T-cell (primary cell): ENCODE measurements at regions of chr17 and their contacts with region 1.

Region 1: GRCh38 chr17:29111816-29112499 is 68.2 kb downstream of the MYO18A start:
- DNase-seq: peak; percentile 15 to 74 (median 54)
- ATAC-seq: peak; percentile 68 to 77 (median 70)
- H3K4me3 ChIP-seq: no peak overlapping the region
- H3K4me3 Mint-ChIP-seq: no peak overlapping the region
- H3K27ac ChIP-seq: no peak overlapping the region
- H3K27ac Mint-ChIP-seq: no peak overlapping the region
- H3K4me1 ChIP-seq: peaks cover 0 to 19% of the 10 kb centered on the region in 2 experiments
- H3K4me1 Mint-ChIP-seq: peaks cover 2 to 5% (median 2%) of the 10 kb centered on the region in 3 donors
- H3K27me3 ChIP-seq: no peaks in the 10 kb centered on the region
- H3K27me3 Mint-ChIP-seq: no peaks in the 10 kb centered on the region

Region 2: DNA sequence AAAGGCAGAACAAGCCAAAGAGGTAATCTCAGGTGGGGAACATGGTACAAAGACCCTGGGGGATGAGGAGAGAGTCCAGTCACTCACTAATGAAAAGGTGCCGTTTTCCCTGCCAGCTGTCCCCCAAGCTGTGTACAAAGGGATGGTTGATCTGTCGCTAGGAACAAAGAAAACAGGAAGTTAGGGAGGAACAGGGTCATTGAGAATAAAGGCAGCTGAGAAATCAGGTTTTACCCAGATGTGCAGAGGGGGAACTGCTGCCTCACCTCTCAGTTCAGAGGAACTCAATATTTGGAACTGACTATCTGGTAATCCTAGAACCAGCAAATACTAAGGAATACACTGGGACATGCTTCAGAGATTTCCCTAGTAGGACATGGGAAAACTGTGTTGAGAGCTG is 499.4 kb before region 1 on chr17:
- CTCF ChIA-PET with region 1: no interaction called
- POLR2A ChIA-PET with region 1: no interaction called
- DNase-seq: no peak
- ATAC-seq: no peak
- H3K4me3 ChIP-seq: no peak overlapping the region
- H3K4me3 Mint-ChIP-seq: no peak overlapping the region
- H3K27ac ChIP-seq: no peak overlapping the region
- H3K27ac Mint-ChIP-seq: peak overlapping the region; percentile 32 to 70
- H3K4me1 ChIP-seq: no peaks in the 10 kb centered on the region
- H3K4me1 Mint-ChIP-seq: peaks cover 4 to 9% (median 8%) of the 10 kb centered on the region in 3 donors
- H3K27me3 ChIP-seq: no peaks in the 10 kb centered on the region
- H3K27me3 Mint-ChIP-seq: no peaks in the 10 kb centered on the region

Region 3: GRCh38 chr17:28963055-28963647 is 148.8 kb before region 1 on chr17:
- CTCF ChIA-PET with region 1: interaction called, 14 to 74 read pairs
- POLR2A ChIA-PET with region 1: no interaction called
- DNase-seq: no peak
- ATAC-seq: no peak
- H3K4me3 ChIP-seq: no peak overlapping the region
- H3K4me3 Mint-ChIP-seq: no peak overlapping the region
- H3K27ac ChIP-seq: no peak overlapping the region
- H3K27ac Mint-ChIP-seq: no peak overlapping the region
- H3K4me1 ChIP-seq: peaks cover 0 to 4% of the 10 kb centered on the region in 2 experiments
- H3K4me1 Mint-ChIP-seq: peaks cover 0 to 2% (median 0%) of the 10 kb centered on the region in 3 donors
- H3K27me3 ChIP-seq: peaks cover 0 to 33% of the 10 kb centered on the region in 2 experiments
- H3K27me3 Mint-ChIP-seq: peaks cover 14 to 16% of the 10 kb centered on the region in 2 donors

Region 4: DNA sequence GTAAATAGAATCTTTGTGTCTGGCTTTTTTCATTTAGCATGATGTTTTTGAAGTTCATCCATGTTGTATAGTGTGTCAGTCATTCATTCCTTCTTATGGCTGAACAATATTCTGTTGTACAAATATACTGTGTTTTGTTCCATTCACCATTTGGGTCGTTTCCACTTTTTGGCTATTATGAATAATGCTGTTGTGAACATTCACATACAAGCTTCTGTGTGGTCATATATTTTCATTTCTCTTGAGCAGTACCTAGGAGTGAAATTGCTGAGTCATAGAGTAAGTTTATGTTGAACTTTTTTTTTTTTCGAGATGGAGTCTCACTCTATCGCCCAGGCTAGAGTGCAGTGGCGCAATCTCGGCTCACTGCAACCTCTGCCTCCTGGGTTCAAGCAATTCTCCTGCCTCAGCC is 245.9 kb after region 1 on chr17:
- CTCF ChIA-PET with region 1: no interaction called
- POLR2A ChIA-PET with region 1: no interaction called
- DNase-seq: no peak
- ATAC-seq: no peak
- H3K4me3 ChIP-seq: no peak overlapping the region
- H3K4me3 Mint-ChIP-seq: no peak overlapping the region
- H3K27ac ChIP-seq: no peak overlapping the region
- H3K27ac Mint-ChIP-seq: no peak overlapping the region
- H3K4me1 ChIP-seq: no peaks in the 10 kb centered on the region
- H3K4me1 Mint-ChIP-seq: no peaks in the 10 kb centered on the region
- H3K27me3 ChIP-seq: no peaks in the 10 kb centered on the region
- H3K27me3 Mint-ChIP-seq: peaks cover 2 to 3% of the 10 kb centered on the region in 2 donors